Posterior cingulate gyrus (tissue), 11 donors: ENCODE measurements at regions of chr15 and their contacts with region 1.

Region 1: GRCh38 chr15:92611993-92612745 is 43.4 kb downstream of the FAM174B start:
- DNase-seq: peak in 4 of 10 donors; percentile 42 to 93 (median 58)

Region 2: DNA sequence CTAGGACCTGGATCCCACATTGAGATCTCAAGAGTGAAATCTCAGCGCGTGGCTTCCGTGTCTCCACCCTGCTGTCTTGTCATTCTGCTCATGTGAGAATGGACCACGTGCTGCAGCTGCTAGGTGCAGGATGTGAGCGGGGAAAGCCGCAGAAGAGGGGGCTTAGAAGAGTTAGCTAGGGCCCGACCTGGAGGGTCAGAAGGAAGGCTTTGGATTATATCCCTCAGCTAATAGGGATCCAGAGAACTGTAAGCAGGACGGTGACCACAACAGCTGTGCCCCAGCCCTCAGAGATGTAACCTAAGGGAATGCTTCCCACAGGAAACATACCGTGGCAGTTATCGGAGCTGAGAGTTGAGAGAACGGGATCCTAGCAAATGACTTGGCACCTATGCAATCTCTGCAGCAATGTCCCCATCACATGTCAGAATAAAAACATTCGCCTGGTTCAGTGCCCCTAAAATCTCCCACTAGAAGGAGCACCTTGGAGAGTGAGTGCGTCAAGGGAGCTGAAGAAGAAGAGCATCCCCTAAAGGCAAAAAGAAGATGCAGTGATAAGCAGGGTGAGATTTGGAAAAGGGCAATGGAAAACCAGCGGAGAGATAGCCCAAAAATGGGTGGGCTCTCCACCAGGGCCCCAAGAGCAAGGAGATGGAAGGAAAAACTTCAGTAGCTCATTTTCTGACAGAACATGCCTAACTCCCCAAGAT is 295.4 kb before region 1 on chr15:
- intact Hi-C with region 1: no loop called
- DNase-seq: no peak

Region 3: GRCh38 chr15:92683232-92683834 is 71.2 kb after region 1 on chr15:
- intact Hi-C with region 1: loop called (anchors 1 kb)
- DNase-seq: peak in 7 of 10 donors; percentile 34 to 94 (median 65)

Region 4: DNA sequence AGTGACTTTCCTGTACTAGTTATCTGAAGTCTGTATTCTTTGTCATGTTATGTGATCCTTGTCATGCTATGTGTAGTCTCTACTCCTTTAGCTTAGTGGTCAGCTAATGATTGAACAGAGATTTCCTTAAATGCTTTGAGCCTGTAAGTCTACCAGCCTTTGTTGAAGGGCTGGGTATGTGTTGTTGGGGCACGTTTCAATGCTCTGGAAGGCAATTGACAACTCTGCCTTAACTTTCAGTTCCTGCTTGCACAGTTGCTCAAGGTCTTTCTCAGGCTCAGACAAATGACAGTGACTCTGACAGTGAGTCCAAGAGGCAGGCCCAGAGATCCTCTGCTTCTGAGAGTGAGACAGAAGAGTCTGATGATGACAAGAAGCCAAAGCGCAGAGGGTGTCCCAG is 377.3 kb after region 1 on chr15:
- intact Hi-C with region 1: no loop called
- DNase-seq: no peak